Body of pancreas (tissue), 4 donors: ENCODE measurements at regions of chr1 and their contacts with region 1.

Region 1: DNA sequence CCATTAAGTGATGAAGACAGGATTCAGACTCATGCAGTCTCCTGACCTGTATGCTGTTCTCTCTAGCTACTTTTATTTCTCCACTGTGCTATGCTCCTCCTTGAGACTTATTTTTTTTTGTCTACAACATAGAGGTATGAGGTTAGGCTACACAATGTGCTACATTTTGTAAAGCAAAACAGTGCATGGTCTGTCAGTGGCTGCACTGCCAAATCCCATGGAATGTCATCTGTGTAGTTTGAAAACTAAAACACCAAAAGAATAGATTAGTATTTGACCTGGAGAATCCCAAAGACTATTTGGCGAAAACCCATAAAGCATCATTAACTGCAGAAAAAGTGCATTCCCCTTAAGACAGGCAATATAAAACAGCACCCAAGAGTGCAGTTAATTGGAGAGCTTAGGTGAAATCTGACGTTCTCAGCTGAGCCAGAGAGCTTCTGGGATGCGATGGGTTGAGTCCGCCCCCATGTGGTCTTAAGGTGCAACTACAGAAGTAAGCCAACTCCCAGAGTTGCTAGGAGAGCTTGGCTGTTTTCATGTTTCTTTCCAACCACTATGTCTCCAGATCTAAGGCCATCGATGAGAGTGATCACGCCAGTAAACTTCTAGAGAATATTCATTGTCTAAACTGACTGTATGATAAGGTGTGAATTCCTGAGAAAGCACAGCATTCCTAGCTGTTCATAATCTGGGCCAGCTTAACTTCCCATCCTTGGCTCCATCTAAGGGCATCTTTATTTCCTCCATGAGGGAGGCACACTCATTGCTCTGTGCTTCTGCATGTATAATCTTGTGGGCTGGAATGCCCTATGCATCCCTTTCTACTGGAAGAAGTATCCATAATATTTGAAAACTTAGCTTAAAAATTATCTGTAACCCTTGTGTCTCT is 20.7 kb upstream of the CYP2J2 start:
- DNase-seq: peak; percentile 59 to 71 (median 68)
- ATAC-seq: peak; percentile 89
- H3K4me3 ChIP-seq: no peak overlapping the region
- H3K27ac ChIP-seq: no peak overlapping the region
- H3K4me1 ChIP-seq: no peaks in the 10 kb centered on the region
- H3K27me3 ChIP-seq: no peaks in the 10 kb centered on the region
- CTCF ChIP-seq: peak; percentile 85 to 92 (median 89)
- POLR2A ChIP-seq: no peak

Region 2: GRCh38 chr1:59759156-59759925 is 188.0 kb before region 1 on chr1:
- intact Hi-C with region 1: no loop called
- DNase-seq: peak; percentile 82 to 87 (median 87)
- ATAC-seq: peak; percentile 99
- H3K4me3 ChIP-seq: no peak overlapping the region
- H3K27ac ChIP-seq: peak overlapping the region in 3 of 4 donors; percentile 32 to 48 (median 47)
- H3K4me1 ChIP-seq: peaks cover 10% of the 10 kb centered on the region
- H3K27me3 ChIP-seq: no peaks in the 10 kb centered on the region
- CTCF ChIP-seq: peak; percentile 86 to 98 (median 98)
- POLR2A ChIP-seq: no peak

Region 3: GRCh38 chr1:59831527-59832137 is 115.7 kb before region 1 on chr1:
- intact Hi-C with region 1: no loop called
- DNase-seq: no peak
- ATAC-seq: no peak
- H3K4me3 ChIP-seq: no peak overlapping the region
- H3K27ac ChIP-seq: no peak overlapping the region
- H3K4me1 ChIP-seq: no peaks in the 10 kb centered on the region
- H3K27me3 ChIP-seq: no peaks in the 10 kb centered on the region
- CTCF ChIP-seq: no peak
- POLR2A ChIP-seq: no peak

Region 4: GRCh38 chr1:59880735-59881134 is 66.6 kb before region 1 on chr1:
- intact Hi-C with region 1: loop called (anchors 5 kb)
- DNase-seq: peak in 2 of 4 donors; percentile 16 to 17
- ATAC-seq: no peak
- H3K4me3 ChIP-seq: no peak overlapping the region
- H3K27ac ChIP-seq: no peak overlapping the region
- H3K4me1 ChIP-seq: no peaks in the 10 kb centered on the region
- H3K27me3 ChIP-seq: no peaks in the 10 kb centered on the region
- CTCF ChIP-seq: no peak
- POLR2A ChIP-seq: no peak

Region 5: GRCh38 chr1:59976194-59977074 is 29.1 kb after region 1 on chr1:
- intact Hi-C with region 1: no loop called
- DNase-seq: peak; percentile 66 to 79 (median 70)
- ATAC-seq: peak; percentile 78
- H3K4me3 ChIP-seq: no peak overlapping the region
- H3K27ac ChIP-seq: no peak overlapping the region
- H3K4me1 ChIP-seq: peaks cover 7% of the 10 kb centered on the region
- H3K27me3 ChIP-seq: no peaks in the 10 kb centered on the region
- CTCF ChIP-seq: peak; percentile 67 to 91 (median 73)
- POLR2A ChIP-seq: no peak